ENCODE measurements at regions of chr12 and their contacts with region 1.

Region 1: DNA sequence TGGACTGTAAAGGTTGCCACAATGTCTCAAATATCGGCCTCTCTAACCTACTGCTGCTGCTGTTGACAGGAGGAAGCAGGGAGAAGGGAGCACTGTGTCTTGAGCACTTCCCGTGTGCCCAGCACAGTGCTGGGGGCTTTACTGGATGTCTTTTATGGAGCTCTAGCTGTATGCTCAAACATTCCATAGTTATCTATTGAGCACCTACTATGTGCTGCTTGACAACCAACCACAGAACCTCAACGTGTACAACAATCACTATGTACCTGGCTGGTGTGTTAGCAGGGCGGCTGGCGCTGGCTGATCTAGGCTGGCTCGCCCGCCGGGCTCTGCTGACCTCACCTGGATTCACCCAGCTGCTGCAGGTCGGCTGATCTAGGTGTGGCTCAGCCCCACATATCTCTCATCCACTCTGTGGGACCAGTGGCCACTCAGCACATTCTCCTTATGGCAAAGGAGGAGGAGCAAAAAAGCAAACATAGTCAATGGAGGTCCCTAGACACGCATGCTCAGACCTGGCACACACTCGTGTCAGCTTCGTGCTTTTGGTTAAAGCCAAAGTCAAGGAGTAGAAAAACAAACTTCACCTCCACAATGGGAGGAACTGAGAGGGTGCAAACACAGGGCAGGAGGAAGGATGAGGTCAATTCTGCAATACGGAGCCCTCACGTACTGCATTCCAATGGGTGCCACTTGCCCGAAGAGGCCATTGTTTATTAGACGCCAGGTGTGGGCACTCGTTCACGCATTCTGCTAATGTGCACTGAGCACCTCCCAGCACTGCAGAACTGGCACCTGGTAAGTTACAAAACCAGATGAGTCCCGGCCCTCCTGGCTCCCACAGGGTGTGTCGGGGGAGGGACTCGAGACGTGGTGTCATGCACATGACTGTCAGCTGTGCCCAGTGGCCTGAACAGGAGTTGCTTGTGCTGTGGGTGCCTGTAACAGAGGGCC is 147.2 kb downstream of the SCARB1 start:
- DNase-seq: no peak
- ATAC-seq: no peak
- H3K4me3 ChIP-seq: no peak overlapping the region
- H3K27ac ChIP-seq: peak overlapping the region in 1 of 2 experiments; percentile 67; a peak in 3 of 6 replicates
- H3K4me1 ChIP-seq: peaks cover 29% of the 10 kb centered on the region
- CTCF ChIP-seq: no peak
- EP300 ChIP-seq: no peak
- POLR2A ChIP-seq: no peak
- RAD21 ChIP-seq: no peak

Region 2: DNA sequence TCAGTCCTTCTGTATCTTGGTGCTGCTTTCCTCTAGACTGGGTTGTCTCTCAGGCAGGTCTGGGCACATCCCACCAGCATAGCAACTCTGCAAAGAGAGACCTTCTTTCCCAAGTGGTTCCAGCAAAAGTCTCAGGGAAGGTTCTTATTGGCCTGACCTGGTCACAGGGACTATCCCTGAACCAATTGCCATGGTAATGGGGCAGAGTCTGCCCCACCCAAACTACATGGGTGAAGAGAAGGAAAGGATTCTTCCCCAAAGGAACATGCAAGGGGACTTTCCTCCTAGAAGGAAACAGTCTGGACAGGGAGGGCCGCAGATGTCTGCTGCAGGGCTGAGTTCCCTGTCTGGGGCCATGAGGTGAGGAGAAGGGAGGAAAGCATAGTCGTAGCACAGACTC is 26.9 kb before region 1 on chr12:
- CTCF ChIA-PET with region 1: interaction called, 3 read pairs
- POLR2A ChIA-PET with region 1: interaction called, 11 read pairs
- DNase-seq: no peak
- ATAC-seq: peak in 1 of 2 experiments; percentile 30; a peak in 3 of 6 replicates
- H3K4me3 ChIP-seq: no peak overlapping the region
- H3K27ac ChIP-seq: peak overlapping the region in 1 of 2 experiments; percentile 51; a peak in 2 of 6 replicates
- H3K4me1 ChIP-seq: peaks cover 22% of the 10 kb centered on the region
- CTCF ChIP-seq: no peak
- EP300 ChIP-seq: no peak
- POLR2A ChIP-seq: no peak
- RAD21 ChIP-seq: no peak